ENCODE measurements at regions of chr22 and their contacts with region 1.

Region 1: GRCh38 chr22:26330966-26331625 is 98.0 kb upstream of the ASPHD2 start:
- DNase-seq: peak; percentile 85

Region 2: DNA sequence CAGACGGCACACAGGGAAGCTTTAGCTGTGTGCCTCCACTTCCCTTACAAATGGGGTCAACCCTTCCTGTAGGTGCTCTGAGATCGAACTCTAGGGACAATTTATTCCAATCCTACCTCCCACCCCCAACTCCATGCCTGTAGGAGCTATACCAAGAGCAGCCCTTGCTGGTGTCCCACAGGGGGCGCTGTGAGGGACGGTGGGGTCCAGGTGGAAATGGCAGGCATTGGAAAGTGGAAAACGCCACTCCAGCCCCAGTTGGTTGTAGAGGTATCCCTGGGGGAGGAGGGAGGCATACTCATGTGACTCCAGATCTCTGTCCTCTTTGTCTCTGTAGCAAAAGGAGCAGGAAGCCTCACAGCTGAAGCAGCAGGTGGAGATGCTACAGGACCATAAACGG is 427.8 kb before region 1 on chr22:
- in situ Hi-C with region 1: loop called (anchors 25 kb)
- DNase-seq: no peak

Region 3: DNA sequence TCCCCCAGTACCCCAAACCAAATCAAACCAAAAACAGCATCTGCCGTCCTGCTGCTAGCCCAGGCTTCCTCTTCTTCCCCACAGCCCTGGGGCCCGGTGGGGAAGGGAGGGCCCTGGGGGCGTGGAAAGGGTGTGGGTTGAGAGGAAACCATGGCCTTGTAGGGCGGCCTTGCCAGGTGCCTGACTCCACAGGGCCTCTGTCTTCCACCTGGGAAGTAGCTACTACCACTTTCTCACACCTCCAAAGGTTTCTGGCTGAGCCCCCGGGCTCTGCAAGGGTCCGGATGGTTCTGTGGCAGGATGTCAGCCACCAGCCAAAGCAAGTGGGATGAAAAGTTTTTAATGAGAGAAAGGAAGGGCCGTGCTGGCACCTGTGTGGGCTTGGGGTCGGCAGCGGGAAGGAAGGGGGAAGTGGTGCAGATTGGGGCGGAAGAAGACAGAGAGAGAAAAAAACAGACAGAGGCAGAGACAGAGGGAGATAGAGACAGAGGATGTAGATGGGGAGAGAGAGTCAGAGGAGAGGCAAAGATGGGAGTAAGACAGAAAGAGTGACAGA is 248.3 kb after region 1 on chr22:
- in situ Hi-C with region 1: no loop called
- DNase-seq: no peak